Left cardiac atrium (tissue), 4 donors: ENCODE measurements at regions of chr18 and their contacts with region 1.

Region 1: GRCh38 chr18:47756364-47757016 is 174.0 kb downstream of the SMAD2 start:
- DNase-seq: peak; percentile 50
- ATAC-seq: peak in 1 of 2 donors; percentile 56

Region 2: GRCh38 chr18:47050468-47050867 is 706.0 kb before region 1 on chr18:
- intact Hi-C with region 1: loop called in 1 of 2 experiments (anchors 5 kb)
- DNase-seq: no peak
- ATAC-seq: no peak

Region 3: GRCh38 chr18:47100214-47100831 is 656.2 kb before region 1 on chr18:
- intact Hi-C with region 1: loop called in 1 of 2 experiments (anchors 5 kb)
- DNase-seq: peak; percentile 51
- ATAC-seq: peak; percentile 79 to 82

Region 4: GRCh38 chr18:47815486-47816280 is 59.2 kb after region 1 on chr18:
- intact Hi-C with region 1: loop called in 1 of 2 experiments (anchors 5 kb)
- DNase-seq: no peak
- ATAC-seq: peak in 1 of 2 donors; percentile 45